AG04449 (cell line): ENCODE measurements at regions of chr5 and their contacts with region 1.

Region 1: GRCh38 chr5:171418316-171418981 is 998 bp upstream of the FGF18 start:
- DNase-seq: peak; percentile 16
- H3K4me3 ChIP-seq: peak overlapping the region; percentile 48
- CTCF ChIP-seq: peak; percentile 97

Region 2: DNA sequence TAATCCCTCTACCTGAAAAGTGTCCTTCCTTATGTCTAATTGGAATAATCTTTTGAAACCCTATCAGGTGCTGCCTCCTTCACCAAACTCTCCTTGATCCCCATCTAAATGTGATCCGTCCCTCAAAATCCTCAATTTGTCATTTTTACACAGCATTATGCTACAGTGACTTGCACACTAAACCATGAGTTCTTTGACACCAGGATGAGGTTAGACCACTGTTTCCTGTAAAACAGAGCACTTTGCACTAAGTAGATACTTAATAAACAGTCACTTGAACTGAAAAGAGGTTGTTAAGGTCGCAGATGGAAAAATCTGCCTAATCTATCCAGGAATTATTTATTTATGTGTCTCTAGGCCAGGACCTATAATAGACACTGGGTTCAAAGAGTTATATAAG is 153.6 kb before region 1 on chr5:
- CTCF ChIA-PET with region 1: no interaction called
- POLR2A ChIA-PET with region 1: no interaction called
- DNase-seq: no peak
- H3K4me3 ChIP-seq: no peak overlapping the region
- CTCF ChIP-seq: no peak

Region 3: DNA sequence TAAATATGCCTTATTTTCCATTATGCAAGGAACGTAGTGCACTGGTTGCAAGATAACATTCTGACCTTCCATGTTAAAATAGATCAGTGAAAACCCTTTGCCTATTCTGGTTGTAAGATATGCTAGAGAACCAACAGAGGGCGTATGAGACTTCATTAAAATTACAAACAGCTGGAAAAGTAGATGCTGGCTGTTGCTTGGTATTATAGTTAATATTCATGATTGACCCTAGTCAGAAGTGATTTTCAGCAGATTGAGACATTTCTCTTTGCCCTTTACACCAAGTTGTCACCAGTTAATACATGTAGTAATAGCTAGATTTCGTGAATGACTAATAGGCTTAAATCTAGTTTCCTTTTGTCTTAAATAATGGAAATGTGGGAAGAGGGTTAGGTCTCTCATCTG is 12.8 kb before region 1 on chr5:
- CTCF ChIA-PET with region 1: interaction called, 37 read pairs
- POLR2A ChIA-PET with region 1: no interaction called
- DNase-seq: no peak
- H3K4me3 ChIP-seq: no peak overlapping the region
- CTCF ChIP-seq: peak; percentile 35

Region 4: DNA sequence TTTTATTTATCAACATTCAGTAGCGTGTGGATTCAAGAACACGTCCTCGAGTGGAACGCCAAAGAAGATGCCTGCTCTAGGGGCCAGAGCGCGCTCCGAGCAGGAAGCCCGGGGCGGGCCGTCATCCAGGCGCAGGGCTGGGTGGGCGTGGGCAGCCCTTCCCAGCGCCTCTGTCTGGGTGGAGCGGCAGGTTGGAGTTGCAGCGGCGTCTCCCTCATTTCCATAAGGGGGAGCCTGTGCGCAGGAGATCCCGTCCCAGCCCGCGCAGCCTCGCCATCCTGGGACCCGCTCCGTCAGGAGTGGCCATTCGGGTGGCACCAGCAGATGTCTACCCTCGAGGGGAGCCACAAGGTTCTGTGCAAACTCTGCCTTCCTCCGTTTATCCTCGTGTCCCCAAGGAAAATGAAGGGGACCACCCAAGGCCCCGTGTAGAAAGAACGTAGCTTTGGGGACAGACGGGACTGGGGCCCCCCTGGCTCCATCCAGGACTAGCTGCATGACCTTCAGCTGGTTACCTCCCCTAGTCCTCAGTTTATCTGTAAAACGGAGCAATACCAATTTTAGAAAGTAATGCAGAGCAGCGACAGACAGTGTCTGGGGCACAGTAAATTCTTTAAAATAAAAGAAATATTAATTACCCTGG is 211.7 kb after region 1 on chr5:
- CTCF ChIA-PET with region 1: interaction called, 11 read pairs
- POLR2A ChIA-PET with region 1: no interaction called
- DNase-seq: no peak
- H3K4me3 ChIP-seq: peak overlapping the region; percentile 20; the same call in 1 of the 2 replicates
- CTCF ChIP-seq: peak; percentile 76

Region 5: GRCh38 chr5:171640480-171640879 is 222.0 kb after region 1 on chr5:
- CTCF ChIA-PET with region 1: no interaction called
- POLR2A ChIA-PET with region 1: no interaction called
- DNase-seq: no peak
- H3K4me3 ChIP-seq: no peak overlapping the region
- CTCF ChIP-seq: no peak

Region 6: GRCh38 chr5:171871711-171872110 is 453.3 kb after region 1 on chr5:
- CTCF ChIA-PET with region 1: interaction called, 13 read pairs
- POLR2A ChIA-PET with region 1: interaction called, 3 read pairs
- DNase-seq: no peak
- H3K4me3 ChIP-seq: no peak overlapping the region
- CTCF ChIP-seq: no peak

Region 7: DNA sequence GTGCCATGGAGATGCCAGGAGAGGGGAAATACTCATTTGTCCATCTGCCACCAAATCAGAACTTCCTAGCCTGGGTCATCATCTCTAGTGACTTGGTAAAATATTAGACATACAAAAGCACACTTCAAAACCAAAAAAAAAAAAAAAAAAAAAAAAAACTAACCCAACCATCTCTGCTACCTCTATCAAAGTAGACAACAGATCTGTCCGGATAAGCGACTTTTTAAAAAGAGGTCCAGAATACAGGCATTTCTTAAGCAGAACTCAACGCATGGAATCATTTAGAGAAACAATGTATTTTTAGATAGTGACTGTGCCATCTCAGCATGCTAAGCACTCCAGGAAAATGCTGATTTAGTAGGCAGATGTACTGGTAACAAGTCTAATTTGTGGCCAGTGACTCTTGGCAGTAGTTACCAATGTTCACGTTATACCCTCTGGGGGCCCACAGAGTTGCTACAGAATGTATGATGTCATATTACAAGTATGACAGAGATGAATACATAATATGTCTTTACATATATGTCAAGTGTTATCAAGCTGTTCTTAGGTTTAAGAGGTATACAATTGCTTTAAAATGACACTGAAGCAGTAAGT is 474.9 kb after region 1 on chr5:
- CTCF ChIA-PET with region 1: interaction called, 14 read pairs
- POLR2A ChIA-PET with region 1: no interaction called
- DNase-seq: peak; percentile 86
- H3K4me3 ChIP-seq: no peak overlapping the region
- CTCF ChIP-seq: no peak

Region 8: DNA sequence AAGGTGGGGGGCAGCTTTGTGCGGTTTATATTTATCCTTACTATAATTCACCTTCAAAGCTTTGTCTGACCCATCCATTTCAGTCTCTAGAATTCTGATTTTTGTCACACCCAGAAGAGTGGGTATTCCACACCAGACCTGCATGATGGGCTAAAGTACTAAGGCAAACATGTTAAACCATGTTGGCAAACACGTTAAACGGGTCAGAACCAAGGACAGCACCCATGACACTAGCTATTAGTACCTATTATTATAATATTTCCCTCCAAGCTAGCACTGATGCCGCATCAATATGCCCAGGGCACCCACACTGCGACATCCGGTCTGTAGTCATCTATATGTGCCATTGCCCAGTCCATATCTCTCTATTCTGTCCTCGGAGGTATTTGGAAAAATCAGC is 483.3 kb after region 1 on chr5:
- CTCF ChIA-PET with region 1: interaction called, 153 read pairs
- POLR2A ChIA-PET with region 1: interaction called, 3 read pairs
- DNase-seq: no peak
- H3K4me3 ChIP-seq: no peak overlapping the region
- CTCF ChIP-seq: no peak

Region 9: GRCh38 chr5:172479044-172479783 is 1060.8 kb after region 1 on chr5:
- CTCF ChIA-PET with region 1: no interaction called
- POLR2A ChIA-PET with region 1: no interaction called
- DNase-seq: peak; percentile 36
- H3K4me3 ChIP-seq: no peak overlapping the region
- CTCF ChIP-seq: peak; percentile 89